ENCODE measurements at regions of chr3 and their contacts with region 1.

Region 1: GRCh38 chr3:157081681-157082210 is 78.2 kb downstream of the CCNL1 start:
- DNase-seq: peak; percentile 90 to 92
- ATAC-seq: peak; percentile 98

Region 2: GRCh38 chr3:156535162-156535627 is 546.6 kb before region 1 on chr3:
- intact Hi-C with region 1: loop called in 1 of 2 experiments (anchors 10 kb)
- DNase-seq: peak in 1 of 2 donors; percentile 67
- ATAC-seq: peak; percentile 91

Region 3: DNA sequence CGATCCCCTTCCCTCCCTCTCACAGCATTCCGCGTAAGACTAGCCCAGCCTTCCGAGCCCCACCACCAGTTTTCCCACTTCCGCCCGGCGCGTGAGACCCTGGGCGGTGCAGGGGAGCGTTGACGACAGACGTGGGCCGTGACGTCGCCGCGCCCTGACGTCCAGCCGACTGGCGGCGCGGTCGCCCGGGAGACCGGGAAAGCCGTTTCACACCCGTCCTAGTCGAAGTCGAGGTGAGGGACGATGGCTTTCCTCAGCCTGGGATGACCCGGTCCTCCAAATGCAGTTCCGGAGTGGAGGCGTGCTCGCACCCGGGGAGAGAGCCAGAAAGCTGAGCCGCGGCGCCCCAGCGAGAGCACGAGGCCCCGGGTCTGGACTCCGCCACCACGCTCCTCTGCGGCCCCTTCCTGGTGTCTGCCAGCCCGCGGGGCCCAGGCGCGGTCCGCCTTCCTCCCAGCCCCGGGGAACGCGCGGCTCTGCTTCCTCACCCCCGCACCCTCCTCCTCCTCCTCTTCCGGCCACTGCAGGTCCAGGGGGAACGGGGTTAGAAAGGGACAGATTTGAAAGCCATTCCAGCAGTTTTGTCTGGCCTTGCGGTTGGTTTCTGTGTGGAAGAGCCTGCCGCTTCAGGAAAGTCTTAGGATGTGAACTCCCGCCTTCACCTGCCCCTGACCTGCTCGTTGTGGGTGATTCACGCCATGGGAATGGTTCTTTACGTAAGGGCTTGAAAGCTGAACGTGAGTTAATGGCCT is 255.4 kb before region 1 on chr3 and contains the start of gene LEKR1:
- intact Hi-C with region 1: loop called in 1 of 2 experiments (anchors 5 kb)
- DNase-seq: peak; percentile 87 to 92
- ATAC-seq: peak; percentile 87
- total RNA-seq, gene LEKR1: 1.1 to 2.1 TPM

Region 4: GRCh38 chr3:157029365-157029790 is 52.4 kb before region 1 on chr3:
- intact Hi-C with region 1: no loop called
- DNase-seq: no peak
- ATAC-seq: no peak

Measured in left colon (tissue), 2 donors.